ENCODE measurements at regions of chr3 and their contacts with region 1.

Region 1: GRCh38 chr3:151168269-151169094 is 34.5 kb downstream of the GPR171 start:
- DNase-seq: peak; percentile 55 to 79 (median 68)
- ATAC-seq: peak; percentile 77
- H3K4me3 ChIP-seq: no peak overlapping the region
- H3K4me3 Mint-ChIP-seq: no peak overlapping the region
- H3K27ac ChIP-seq: no peak overlapping the region
- H3K27ac Mint-ChIP-seq: peak overlapping the region in 1 of 9 donors; percentile 31
- H3K4me1 ChIP-seq: peaks cover 24 to 30% of the 10 kb centered on the region in 2 donors
- H3K4me1 Mint-ChIP-seq: peaks cover 28 to 48% (median 40%) of the 10 kb centered on the region in 7 donors
- H3K27me3 ChIP-seq: no peaks in the 10 kb centered on the region
- H3K27me3 Mint-ChIP-seq: no peaks in the 10 kb centered on the region

Region 2: GRCh38 chr3:151183265-151183671 is 14.8 kb after region 1 on chr3:
- CTCF ChIA-PET with region 1: interaction called, 12 read pairs
- POLR2A ChIA-PET with region 1: interaction called, 7 read pairs
- intact Hi-C with region 1: loop called (anchors 1 kb)
- DNase-seq: peak in 4 of 9 donors; percentile 13 to 65 (median 54)
- ATAC-seq: peak; percentile 69
- H3K4me3 ChIP-seq: no peak overlapping the region
- H3K4me3 Mint-ChIP-seq: peak overlapping the region; percentile 58 to 85 (median 78)
- H3K27ac ChIP-seq: peak overlapping the region; percentile 38
- H3K27ac Mint-ChIP-seq: peak overlapping the region; percentile 66 to 90 (median 83)
- H3K4me1 ChIP-seq: peaks cover 4 to 15% of the 10 kb centered on the region in 2 donors
- H3K4me1 Mint-ChIP-seq: peaks cover 20 to 60% (median 44%) of the 10 kb centered on the region in 7 donors
- H3K27me3 ChIP-seq: no peaks in the 10 kb centered on the region
- H3K27me3 Mint-ChIP-seq: peaks cover 0 to 4% (median 0%) of the 10 kb centered on the region in 5 donors

Region 3: GRCh38 chr3:151210676-151211381 is 42.3 kb after region 1 on chr3:
- CTCF ChIA-PET with region 1: interaction called, 44 read pairs
- POLR2A ChIA-PET with region 1: interaction called, 5 read pairs
- intact Hi-C with region 1: loop called (anchors 1 kb)
- DNase-seq: no peak
- ATAC-seq: peak; percentile 49
- H3K4me3 ChIP-seq: no peak overlapping the region
- H3K4me3 Mint-ChIP-seq: peak overlapping the region; percentile 6 to 83 (median 62)
- H3K27ac ChIP-seq: no peak overlapping the region
- H3K27ac Mint-ChIP-seq: peak overlapping the region; percentile 77 to 93 (median 83)
- H3K4me1 ChIP-seq: peaks cover 24 to 31% of the 10 kb centered on the region in 2 donors
- H3K4me1 Mint-ChIP-seq: peaks cover 18 to 54% (median 46%) of the 10 kb centered on the region in 7 donors
- H3K27me3 ChIP-seq: no peaks in the 10 kb centered on the region
- H3K27me3 Mint-ChIP-seq: no peaks in the 10 kb centered on the region

Region 4: GRCh38 chr3:151327571-151328198 is 159.2 kb after region 1 on chr3:
- CTCF ChIA-PET with region 1: interaction called, 8 read pairs
- POLR2A ChIA-PET with region 1: no interaction called
- intact Hi-C with region 1: loop called (anchors 1 kb)
- DNase-seq: no peak
- ATAC-seq: no peak
- H3K4me3 ChIP-seq: no peak overlapping the region
- H3K4me3 Mint-ChIP-seq: no peak overlapping the region
- H3K27ac ChIP-seq: no peak overlapping the region
- H3K27ac Mint-ChIP-seq: no peak overlapping the region
- H3K4me1 ChIP-seq: no peaks in the 10 kb centered on the region
- H3K4me1 Mint-ChIP-seq: peaks cover 4 to 7% (median 6%) of the 10 kb centered on the region in 7 donors
- H3K27me3 ChIP-seq: no peaks in the 10 kb centered on the region
- H3K27me3 Mint-ChIP-seq: peaks cover 10 to 30% (median 19%) of the 10 kb centered on the region in 5 donors

Region 5: GRCh38 chr3:151918253-151919029 is 750.0 kb after region 1 on chr3:
- CTCF ChIA-PET with region 1: no interaction called
- POLR2A ChIA-PET with region 1: no interaction called
- intact Hi-C with region 1: loop called (anchors 5 kb)
- DNase-seq: peak in 5 of 9 donors; percentile 11 to 40 (median 21)
- ATAC-seq: peak; percentile 57
- H3K4me3 ChIP-seq: no peak overlapping the region
- H3K4me3 Mint-ChIP-seq: no peak overlapping the region
- H3K27ac ChIP-seq: no peak overlapping the region
- H3K27ac Mint-ChIP-seq: no peak overlapping the region
- H3K4me1 ChIP-seq: no peaks in the 10 kb centered on the region
- H3K4me1 Mint-ChIP-seq: no peaks in the 10 kb centered on the region
- H3K27me3 ChIP-seq: no peaks in the 10 kb centered on the region
- H3K27me3 Mint-ChIP-seq: peaks cover 0 to 7% (median 0%) of the 10 kb centered on the region in 5 donors